ENCODE measurements at regions of chr2 and their contacts with region 1.

Region 1: DNA sequence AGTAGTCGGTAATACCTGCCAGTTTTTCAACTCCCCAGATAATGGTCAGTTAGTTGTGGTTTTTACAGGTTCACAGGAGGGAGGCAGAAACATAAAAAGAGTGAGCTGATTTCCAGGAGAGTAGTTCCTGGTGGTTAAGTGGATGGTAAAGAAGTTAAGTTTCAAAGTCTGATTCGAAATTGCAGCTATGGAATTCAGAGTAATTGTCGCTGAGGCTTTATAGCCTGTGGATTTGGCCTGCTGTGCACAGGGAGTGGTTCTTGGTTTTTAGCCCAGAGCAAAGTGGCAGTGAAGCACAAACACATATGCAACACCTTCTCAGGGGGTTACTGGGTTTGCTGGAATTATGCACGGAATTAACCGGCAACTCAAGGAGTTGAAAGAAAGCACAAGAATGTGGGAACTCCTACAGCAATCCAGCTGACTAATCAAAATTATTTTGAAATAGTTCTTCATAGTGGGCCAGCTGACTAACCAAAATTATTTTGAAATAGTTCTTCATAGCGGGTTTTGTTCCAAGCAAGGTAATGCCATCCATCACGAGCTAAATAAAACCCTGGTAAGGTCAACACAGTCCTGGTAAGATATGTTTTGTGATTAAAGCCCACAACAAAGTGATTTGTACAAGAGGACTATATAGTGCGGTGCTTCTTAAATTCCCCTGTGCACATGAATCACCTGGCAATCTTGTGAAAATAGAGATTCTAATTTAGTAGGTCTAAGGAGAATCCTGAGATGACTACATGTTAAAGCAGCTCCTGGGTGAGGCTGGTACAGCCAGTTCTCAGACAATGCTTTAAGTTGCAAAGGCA is 94.4 kb downstream of the SGPP2 start:
- DNase-seq: peak; percentile 94
- H3K4me3 ChIP-seq: peak overlapping the region in 1 of 3 experiments; percentile 11
- H3K27ac ChIP-seq: peak overlapping the region; percentile 56
- H3K4me1 ChIP-seq: peaks cover 13% of the 10 kb centered on the region
- H3K27me3 ChIP-seq: no peaks in the 10 kb centered on the region
- CTCF ChIP-seq: no peak

Region 2: GRCh38 chr2:222424729-222425671 is 93.8 kb before region 1 on chr2:
- CTCF ChIA-PET with region 1: no interaction called
- dilution Hi-C with region 1: no loop called
- in situ Hi-C with region 1: no loop called
- intact Hi-C with region 1: loop called (anchors 5 kb)
- DNase-seq: no peak
- H3K4me3 ChIP-seq: peak overlapping the region; percentile 26 to 56 (median 51)
- H3K27ac ChIP-seq: no peak overlapping the region
- H3K4me1 ChIP-seq: peaks cover 5% of the 10 kb centered on the region
- H3K27me3 ChIP-seq: peaks cover 16% of the 10 kb centered on the region
- CTCF ChIP-seq: no peak

Measured in mammary epithelial cell (primary cell).